Activated CD4-positive, alpha-beta T cell treated with anti-CD3 and anti-CD28 coated beads, Interleukin-2, amount 10 ng/mL, durations not matched to agents 7 days and 5 days (primary cell): ENCODE measurements at regions of chr4 and their contacts with region 1.

Region 1: DNA sequence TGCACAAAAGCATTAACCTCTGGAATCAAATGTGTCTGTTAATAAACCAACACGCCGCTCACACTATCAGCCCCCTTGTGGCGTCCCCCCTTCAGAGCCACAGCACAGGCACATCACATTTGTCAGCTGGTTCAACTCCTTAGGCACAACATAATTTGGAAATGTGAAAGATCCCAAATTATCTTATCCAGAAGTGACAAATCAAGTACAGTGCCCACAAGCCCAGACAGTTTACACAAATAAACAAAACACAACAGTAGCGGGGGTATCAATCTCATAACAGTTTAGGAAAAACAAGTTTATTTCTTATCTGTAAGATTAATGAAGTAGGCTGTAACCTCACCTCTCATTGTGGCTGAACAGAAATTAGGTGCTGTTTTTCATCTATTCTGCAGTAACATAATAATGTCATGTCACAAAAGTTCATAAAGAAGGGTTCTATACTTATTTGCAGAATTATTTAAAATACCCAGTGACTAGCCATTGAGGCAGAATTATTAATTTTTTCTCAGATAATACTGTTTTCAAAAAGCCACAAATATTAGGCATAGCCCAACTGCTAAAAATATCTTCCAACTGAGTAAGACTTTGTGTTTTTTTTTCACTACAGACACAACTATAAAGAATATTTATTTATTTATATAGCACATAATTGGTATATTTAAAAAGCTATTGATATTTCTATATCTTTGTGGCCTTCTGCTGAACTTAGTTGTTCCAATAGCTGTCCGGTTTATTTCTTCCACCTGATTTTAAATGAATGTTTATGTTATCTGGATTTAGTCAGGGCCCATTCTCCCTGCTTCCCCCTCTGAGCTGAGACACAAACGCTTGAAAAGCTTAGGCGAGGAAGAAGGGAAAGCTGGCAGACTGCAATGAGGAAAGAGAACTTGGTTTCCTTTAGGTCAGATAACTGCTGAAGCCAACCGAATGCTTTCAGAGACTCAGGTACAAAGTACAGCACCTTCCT is 214.7 kb downstream of the QDPR start:
- DNase-seq: no peak
- H3K4me3 Mint-ChIP-seq: no peak overlapping the region
- H3K27ac Mint-ChIP-seq: no peak overlapping the region
- H3K4me1 Mint-ChIP-seq: no peaks in the 10 kb centered on the region
- H3K27me3 Mint-ChIP-seq: peaks cover 15% of the 10 kb centered on the region

Region 2: DNA sequence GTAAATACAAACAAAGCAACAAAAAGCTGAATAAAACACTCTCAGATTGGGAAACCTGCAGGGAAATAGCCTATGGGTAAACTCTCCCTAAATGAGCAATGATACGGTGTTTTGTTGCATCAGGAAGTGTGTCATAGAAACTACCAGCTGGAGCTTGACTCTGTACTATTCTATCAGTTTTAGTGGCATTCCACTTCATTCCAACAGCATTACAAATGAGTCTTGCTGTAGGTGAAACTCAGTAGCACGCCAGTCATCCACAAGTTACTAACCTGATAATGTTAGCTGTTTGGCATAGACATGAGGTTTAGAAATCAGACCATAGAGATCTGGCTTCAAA is 1383.6 kb before region 1 on chr4:
- CTCF ChIA-PET with region 1: no interaction called
- POLR2A ChIA-PET with region 1: interaction called, 12 read pairs
- DNase-seq: no peak
- H3K4me3 Mint-ChIP-seq: no peak overlapping the region
- H3K27ac Mint-ChIP-seq: no peak overlapping the region
- H3K4me1 Mint-ChIP-seq: no peaks in the 10 kb centered on the region
- H3K27me3 Mint-ChIP-seq: peaks cover 6% of the 10 kb centered on the region